HEK293 (cell line): ENCODE measurements at regions of chr1 and their contacts with region 1.

Region 1: GRCh38 chr1:119347858-119348257 is 20.7 kb upstream of the HAO2 start:
- H3K4me3 ChIP-seq: no peak overlapping the region
- H3K27ac ChIP-seq: no peak overlapping the region
- H3K4me1 ChIP-seq: no peaks in the 10 kb centered on the region
- CTCF ChIP-seq: no peak

Region 2: DNA sequence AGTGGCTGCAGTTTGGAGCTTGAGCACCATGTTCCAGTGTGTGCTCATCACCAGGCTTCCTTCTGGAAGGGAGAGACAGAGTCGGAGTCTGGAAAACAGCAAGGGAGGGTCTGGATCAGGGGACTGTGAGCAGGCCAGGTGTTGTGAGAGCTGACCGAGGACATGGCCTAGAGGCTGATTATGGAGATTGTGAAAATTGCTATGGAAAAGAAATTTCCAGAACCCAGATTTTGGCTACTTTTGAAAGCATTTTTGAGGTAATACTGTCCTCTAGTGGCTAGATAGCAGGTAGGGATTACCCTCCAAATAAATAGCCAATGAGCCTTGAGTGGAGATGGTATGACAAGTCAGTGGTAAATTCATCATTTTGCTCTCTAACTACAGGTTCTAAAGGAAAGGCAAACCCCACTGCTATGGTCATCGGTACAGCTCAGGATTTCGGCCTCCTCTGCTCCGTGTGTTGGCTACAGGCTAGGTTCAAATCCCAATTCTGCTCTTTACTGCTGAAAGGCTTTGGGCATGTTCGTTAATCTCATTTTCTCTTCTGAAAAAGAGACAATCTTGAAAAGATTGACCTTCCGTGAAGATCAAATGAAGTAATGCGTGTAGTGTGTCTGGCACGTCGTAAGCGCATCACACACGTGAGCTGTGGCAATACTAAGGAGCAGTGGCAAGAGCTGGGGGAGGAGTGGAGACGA is 19.7 kb after region 1 on chr1:
- CTCF ChIA-PET with region 1: interaction called, 13 read pairs
- POLR2A ChIA-PET with region 1: no interaction called
- H3K4me3 ChIP-seq: no peak overlapping the region
- H3K27ac ChIP-seq: no peak overlapping the region
- H3K4me1 ChIP-seq: 0 out of 2 replicates have a peak, but pooled peaks cover 3% of the 10 kb centered on the region
- CTCF ChIP-seq: peak; percentile 85

Region 3: DNA sequence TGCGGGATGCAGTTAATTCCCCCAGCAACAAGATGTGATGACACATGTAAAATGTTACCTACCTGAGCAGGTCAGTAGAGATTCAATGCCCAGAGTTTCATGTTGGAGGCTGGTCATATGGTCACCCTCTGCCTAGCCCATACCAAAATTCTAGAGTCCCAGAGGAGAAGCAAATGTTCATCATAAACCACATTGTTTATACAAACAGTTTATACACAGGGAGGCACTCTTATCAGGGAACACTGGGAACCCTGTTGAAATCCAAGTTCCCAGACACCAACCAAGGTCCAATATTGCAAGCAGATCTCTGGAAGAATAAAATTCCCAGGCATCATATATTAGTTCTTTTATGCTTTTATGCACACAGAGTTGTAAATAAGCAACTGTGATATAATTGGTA is 31.3 kb after region 1 on chr1:
- CTCF ChIA-PET with region 1: no interaction called
- POLR2A ChIA-PET with region 1: no interaction called
- H3K4me3 ChIP-seq: no peak overlapping the region
- H3K27ac ChIP-seq: no peak overlapping the region
- H3K4me1 ChIP-seq: no peaks in the 10 kb centered on the region
- CTCF ChIP-seq: no peak